H1 (cell line): ENCODE measurements at regions of chr2 and their contacts with region 1.

Region 1: GRCh38 chr2:230170532-230170931 is 49.3 kb downstream of the SP110 start:
- DNase-seq: no peak
- H3K4me3 ChIP-seq: no peak overlapping the region
- H3K27ac ChIP-seq: no peak overlapping the region
- H3K4me1 ChIP-seq: peaks cover 0 to 3% (median 0%) of the 10 kb centered on the region in 4 experiments; a peak in 2 of 7 replicates
- H3K27me3 ChIP-seq: no peaks in the 10 kb centered on the region
- CTCF ChIP-seq: no peak
- EP300 ChIP-seq: no peak
- POLR2A ChIP-seq: no peak
- RAD21 ChIP-seq: no peak

Region 2: DNA sequence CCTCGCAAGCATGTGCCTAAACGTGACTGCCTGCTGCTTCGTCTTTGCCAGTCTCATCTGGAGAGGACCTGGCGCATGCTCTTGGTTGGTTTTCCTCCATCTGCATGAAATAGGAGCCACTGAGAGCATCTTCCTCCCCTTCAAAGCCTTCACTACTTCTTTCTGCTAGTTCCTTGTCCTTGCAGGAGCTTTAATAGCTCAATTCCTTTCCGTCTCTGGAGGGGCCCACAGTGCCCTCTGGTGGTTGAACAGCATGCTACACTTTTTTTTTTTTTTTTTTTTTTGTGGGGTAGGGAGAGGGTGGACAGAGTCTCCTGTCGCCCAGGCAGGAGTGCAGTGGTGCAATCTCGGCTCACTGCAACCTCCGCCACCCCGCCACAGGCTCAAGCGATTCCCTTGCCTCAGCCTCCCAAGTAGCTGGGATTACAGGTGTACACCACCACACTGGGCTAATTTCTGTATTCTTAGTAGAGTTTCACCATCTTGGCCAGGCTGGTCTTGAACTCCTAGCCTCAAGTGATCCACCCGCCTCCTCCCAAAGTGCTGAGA is 10.3 kb before region 1 on chr2:
- CTCF ChIA-PET with region 1: interaction called, 16 read pairs
- POLR2A ChIA-PET with region 1: no interaction called
- DNase-seq: peak; percentile 31 to 71
- H3K4me3 ChIP-seq: no peak overlapping the region
- H3K27ac ChIP-seq: no peak overlapping the region
- H3K4me1 ChIP-seq: peaks cover 0 to 2% (median 0%) of the 10 kb centered on the region in 4 experiments; a peak in 1 of 7 replicates
- H3K27me3 ChIP-seq: no peaks in the 10 kb centered on the region
- CTCF ChIP-seq: peak; percentile 19 to 77 (median 72)
- EP300 ChIP-seq: no peak
- POLR2A ChIP-seq: no peak
- RAD21 ChIP-seq: peak; percentile 81 to 86